GM10248 (cell line): ENCODE measurements at regions of chr2 and their contacts with region 1.

Region 1: DNA sequence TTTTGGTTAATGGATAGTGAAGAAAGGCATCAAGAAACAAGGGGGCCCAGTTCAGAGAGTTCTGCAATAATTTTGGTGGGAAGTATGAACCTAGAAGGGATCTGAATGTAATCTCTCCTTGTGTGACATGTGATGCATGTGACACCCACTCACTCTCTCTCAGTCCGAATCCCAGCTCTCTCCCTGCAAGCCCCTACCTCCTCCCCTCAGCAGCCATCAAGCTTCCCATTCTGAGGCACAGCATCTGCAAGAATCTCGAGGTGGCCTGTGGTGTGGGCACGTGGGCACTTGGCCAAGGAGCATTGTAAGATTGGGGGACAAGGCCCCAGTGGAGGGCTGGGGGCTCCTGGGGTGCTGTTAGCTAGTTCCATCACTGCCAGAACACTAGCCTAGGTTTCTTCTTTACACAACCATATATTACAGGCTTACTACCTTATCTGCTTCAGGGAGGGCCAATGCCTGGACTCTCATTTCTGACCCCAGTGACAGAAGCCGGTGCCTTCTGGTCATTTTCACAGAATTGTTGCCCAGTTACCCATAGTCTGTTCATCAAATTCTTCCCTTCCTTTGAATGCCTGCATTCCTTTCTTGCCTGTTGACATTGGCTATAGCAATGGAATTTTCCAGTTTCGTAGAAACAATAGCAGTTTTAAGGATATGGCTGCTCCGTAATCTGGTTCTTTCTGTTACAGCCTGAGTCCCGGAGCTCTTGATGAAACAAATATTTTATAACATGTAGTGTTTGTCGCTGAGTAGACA is 13.3 kb upstream of the LCLAT1 start:
- DNase-seq: no peak
- CTCF ChIP-seq: no peak

Region 2: GRCh38 chr2:30072250-30072842 is 361.4 kb before region 1 on chr2:
- CTCF ChIA-PET with region 1: no interaction called
- POLR2A ChIA-PET with region 1: no interaction called
- DNase-seq: peak; percentile 71
- CTCF ChIP-seq: peak; percentile 74

Region 3: DNA sequence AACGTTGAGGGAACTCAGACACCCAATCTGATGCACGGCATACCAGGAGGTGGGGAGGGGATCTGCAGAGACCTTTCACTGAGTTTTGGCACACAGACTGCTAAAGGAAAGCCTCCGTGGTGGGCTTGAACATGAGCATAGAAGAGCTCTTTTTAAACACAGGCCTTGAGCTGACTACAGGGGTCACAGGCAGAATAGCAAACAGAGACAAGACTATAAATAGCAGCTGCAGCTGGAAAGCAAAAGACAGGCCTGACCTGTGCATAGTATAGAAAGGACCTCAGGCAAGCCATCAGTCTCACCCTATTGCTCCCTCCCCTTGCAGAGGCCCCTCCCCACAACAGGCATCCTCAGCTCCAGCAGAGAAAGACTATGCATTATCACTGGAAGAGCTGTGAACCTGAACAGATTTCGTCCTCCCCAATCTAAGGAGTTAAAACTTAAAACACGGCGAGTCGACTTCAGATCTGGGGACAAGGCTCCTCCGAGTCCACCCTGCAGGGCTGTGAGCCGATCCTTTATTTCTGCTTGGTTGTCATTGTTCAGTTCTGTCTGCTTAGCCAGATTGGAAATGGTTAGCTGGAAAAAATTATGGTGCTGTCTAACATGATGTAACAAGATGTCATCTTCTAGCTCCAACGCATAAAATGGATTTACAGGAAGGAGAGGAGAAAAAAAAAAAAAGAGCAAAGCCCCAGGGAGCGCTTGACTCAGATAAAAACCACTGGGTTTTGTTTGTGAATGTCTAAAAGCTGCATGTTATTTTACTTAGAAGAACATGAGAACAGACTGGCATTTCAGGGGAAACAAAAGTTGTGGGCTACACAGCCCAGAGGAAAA is 11.9 kb before region 1 on chr2:
- CTCF ChIA-PET with region 1: interaction called, 13 read pairs
- POLR2A ChIA-PET with region 1: no interaction called
- DNase-seq: no peak
- CTCF ChIP-seq: no peak

Region 4: GRCh38 chr2:31205186-31205585 is 771.5 kb after region 1 on chr2:
- CTCF ChIA-PET with region 1: no interaction called
- POLR2A ChIA-PET with region 1: no interaction called
- DNase-seq: no peak
- CTCF ChIP-seq: no peak